ENCODE measurements at regions of chr4 and their contacts with region 1.

Region 1: GRCh38 chr4:101790521-101791188 is at the start of gene BANK1:
- DNase-seq: peak; percentile 1
- ATAC-seq: peak; percentile 97
- H3K4me3 ChIP-seq: peak within 1 kb of the TSS; percentile 46 to 70 (median 56); a peak in 5 of 6 replicates
- H3K27ac ChIP-seq: no peak within 1 kb of the TSS
- H3K4me1 ChIP-seq: no peaks in the 10 kb centered on the region
- H3K27me3 ChIP-seq: peaks cover 2 to 4% of the 10 kb centered on the region in 2 experiments; a peak in 3 of 5 replicates
- CTCF ChIP-seq: peak; percentile 69
- EP300 ChIP-seq: no peak
- POLR2A ChIP-seq: no peak
- RAD21 ChIP-seq: no peak
- total RNA-seq, gene BANK1: 0.15 TPM in 2 replicates

Region 2: GRCh38 chr4:101667348-101667747 is 123.3 kb before region 1 on chr4:
- CTCF ChIA-PET with region 1: no interaction called
- POLR2A ChIA-PET with region 1: no interaction called
- in situ Hi-C with region 1: no loop called
- intact Hi-C with region 1: no loop called
- DNase-seq: no peak
- ATAC-seq: no peak
- H3K4me3 ChIP-seq: no peak overlapping the region
- H3K27ac ChIP-seq: no peak overlapping the region
- H3K4me1 ChIP-seq: no peaks in the 10 kb centered on the region
- H3K27me3 ChIP-seq: no peaks in the 10 kb centered on the region
- CTCF ChIP-seq: no peak
- EP300 ChIP-seq: no peak
- POLR2A ChIP-seq: no peak
- RAD21 ChIP-seq: no peak

Region 3: DNA sequence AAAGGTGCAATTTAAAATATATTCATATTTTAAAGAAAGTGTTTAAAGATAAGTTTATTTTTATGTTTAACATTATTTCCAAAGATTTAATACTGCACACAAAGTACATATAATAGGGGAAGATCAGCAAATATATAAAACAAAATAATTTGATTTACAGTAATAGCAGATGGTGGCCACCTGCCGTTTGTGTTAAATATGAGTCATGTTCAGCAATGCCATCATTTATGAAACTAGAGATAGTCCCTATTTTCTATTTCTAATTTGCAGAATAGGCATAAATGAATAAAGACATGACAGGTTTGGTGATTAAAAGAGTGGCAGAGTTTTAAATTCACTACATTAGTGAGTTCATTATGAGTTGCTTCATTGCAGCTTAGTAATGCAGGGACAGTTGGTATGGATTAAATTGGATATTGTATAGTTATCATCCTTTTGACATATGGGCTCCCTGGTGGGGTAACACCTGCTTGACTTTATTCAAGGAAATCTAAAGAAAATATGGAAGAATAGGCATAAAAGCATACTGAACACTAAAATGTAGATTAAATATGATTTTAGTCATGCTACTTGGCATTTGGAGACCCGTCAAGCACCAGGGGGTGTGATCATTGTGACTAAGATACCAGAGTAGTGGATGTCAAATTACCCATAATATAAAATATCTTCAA is 78.9 kb before region 1 on chr4:
- CTCF ChIA-PET with region 1: no interaction called
- POLR2A ChIA-PET with region 1: no interaction called
- in situ Hi-C with region 1: no loop called
- intact Hi-C with region 1: no loop called
- DNase-seq: no peak
- ATAC-seq: no peak
- H3K4me3 ChIP-seq: no peak overlapping the region
- H3K27ac ChIP-seq: no peak overlapping the region
- H3K4me1 ChIP-seq: no peaks in the 10 kb centered on the region
- H3K27me3 ChIP-seq: no peaks in the 10 kb centered on the region
- CTCF ChIP-seq: no peak
- EP300 ChIP-seq: no peak
- POLR2A ChIP-seq: no peak
- RAD21 ChIP-seq: no peak

Region 4: DNA sequence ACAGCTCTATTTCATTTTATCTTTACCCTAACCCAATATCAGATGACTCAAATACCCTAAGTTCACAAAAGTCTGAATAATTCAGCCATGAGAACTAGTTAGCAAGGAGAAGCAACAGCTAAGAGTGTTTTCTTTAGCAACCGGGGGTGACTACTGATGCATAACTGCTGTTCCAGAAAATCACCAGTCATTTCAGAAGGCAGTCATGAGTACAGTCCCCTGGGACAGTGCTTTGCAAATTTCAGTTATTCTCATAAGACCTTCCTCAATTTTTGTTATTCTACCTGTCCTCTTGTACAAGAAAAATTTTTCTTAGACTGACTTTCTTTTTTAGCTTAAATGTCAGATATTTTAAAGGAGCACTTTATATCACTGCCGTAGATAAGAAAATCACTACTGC is 16.3 kb after region 1 on chr4:
- CTCF ChIA-PET with region 1: no interaction called
- POLR2A ChIA-PET with region 1: no interaction called
- in situ Hi-C with region 1: no loop called
- intact Hi-C with region 1: no loop called
- DNase-seq: no peak
- ATAC-seq: no peak
- H3K4me3 ChIP-seq: no peak overlapping the region
- H3K27ac ChIP-seq: no peak overlapping the region
- H3K4me1 ChIP-seq: no peaks in the 10 kb centered on the region
- H3K27me3 ChIP-seq: no peaks in the 10 kb centered on the region
- CTCF ChIP-seq: no peak
- EP300 ChIP-seq: no peak
- POLR2A ChIP-seq: no peak
- RAD21 ChIP-seq: no peak

Region 5: GRCh38 chr4:101862595-101862994 is 71.9 kb after region 1 on chr4:
- CTCF ChIA-PET with region 1: no interaction called
- POLR2A ChIA-PET with region 1: no interaction called
- in situ Hi-C with region 1: no loop called
- intact Hi-C with region 1: loop called (anchors 5 kb)
- DNase-seq: no peak
- ATAC-seq: no peak
- H3K4me3 ChIP-seq: no peak overlapping the region
- H3K27ac ChIP-seq: no peak overlapping the region
- H3K4me1 ChIP-seq: peaks cover 19% of the 10 kb centered on the region
- H3K27me3 ChIP-seq: no peaks in the 10 kb centered on the region
- CTCF ChIP-seq: no peak
- EP300 ChIP-seq: no peak
- POLR2A ChIP-seq: no peak
- RAD21 ChIP-seq: no peak

Region 6: GRCh38 chr4:102076622-102077021 is 286.0 kb after region 1 on chr4:
- CTCF ChIA-PET with region 1: no interaction called
- POLR2A ChIA-PET with region 1: no interaction called
- in situ Hi-C with region 1: no loop called
- intact Hi-C with region 1: no loop called
- DNase-seq: no peak
- ATAC-seq: no peak
- H3K4me3 ChIP-seq: no peak overlapping the region
- H3K27ac ChIP-seq: no peak overlapping the region
- H3K4me1 ChIP-seq: no peaks in the 10 kb centered on the region
- H3K27me3 ChIP-seq: no peaks in the 10 kb centered on the region
- CTCF ChIP-seq: no peak
- EP300 ChIP-seq: no peak
- POLR2A ChIP-seq: no peak
- RAD21 ChIP-seq: no peak

Measured in HepG2 (cell line).